Endothelial cell of umbilical vein (primary cell): ENCODE measurements at regions of chr14 and their contacts with region 1.

Region 1: DNA sequence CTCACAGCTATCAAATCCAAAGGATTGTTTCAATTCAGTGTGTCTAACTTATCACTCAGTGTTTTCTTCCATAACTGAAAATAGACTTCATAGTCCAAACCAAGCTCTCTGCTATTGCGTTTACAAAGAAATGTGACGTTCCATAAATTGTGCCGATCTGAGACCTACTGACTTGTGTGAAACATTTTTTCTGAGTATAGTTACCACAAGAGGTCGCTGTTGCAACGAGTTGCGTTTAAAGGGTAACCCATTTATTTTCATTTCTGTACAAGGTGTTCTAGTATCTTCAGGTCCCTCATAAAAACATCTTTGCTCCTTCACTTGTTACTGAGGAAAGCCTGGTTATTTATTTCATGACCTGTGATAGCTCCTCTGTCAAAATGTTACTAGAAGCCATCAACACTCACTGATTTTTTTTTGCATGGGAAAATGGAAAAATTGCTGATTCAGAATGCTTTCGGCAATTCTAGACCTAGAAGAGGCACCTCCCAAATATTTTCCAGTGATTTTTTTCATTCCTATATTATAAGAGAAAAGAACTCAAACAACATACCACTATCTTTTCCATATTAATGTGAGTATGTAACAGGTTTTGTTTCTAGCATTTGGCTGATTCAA is 60.9 kb upstream of the OR4E1 start:
- DNase-seq: peak; percentile 56
- H3K4me3 ChIP-seq: no peak overlapping the region
- H3K27ac ChIP-seq: no peak overlapping the region
- H3K4me1 ChIP-seq: no peaks in the 10 kb centered on the region
- H3K27me3 ChIP-seq: peaks cover 8 to 12% of the 10 kb centered on the region in 2 experiments
- CTCF ChIP-seq: peak; percentile 46 to 64
- POLR2A ChIP-seq: no peak

Region 2: GRCh38 chr14:21711360-21711961 is 23.1 kb before region 1 on chr14:
- CTCF ChIA-PET with region 1: interaction called, 11 read pairs
- POLR2A ChIA-PET with region 1: no interaction called
- dilution Hi-C with region 1: no loop called
- intact Hi-C with region 1: no loop called
- DNase-seq: peak; percentile 52
- H3K4me3 ChIP-seq: no peak overlapping the region
- H3K27ac ChIP-seq: no peak overlapping the region
- H3K4me1 ChIP-seq: no peaks in the 10 kb centered on the region
- H3K27me3 ChIP-seq: peaks cover 2 to 4% of the 10 kb centered on the region in 2 experiments
- CTCF ChIP-seq: peak; percentile 58 to 66
- POLR2A ChIP-seq: no peak

Region 3: DNA sequence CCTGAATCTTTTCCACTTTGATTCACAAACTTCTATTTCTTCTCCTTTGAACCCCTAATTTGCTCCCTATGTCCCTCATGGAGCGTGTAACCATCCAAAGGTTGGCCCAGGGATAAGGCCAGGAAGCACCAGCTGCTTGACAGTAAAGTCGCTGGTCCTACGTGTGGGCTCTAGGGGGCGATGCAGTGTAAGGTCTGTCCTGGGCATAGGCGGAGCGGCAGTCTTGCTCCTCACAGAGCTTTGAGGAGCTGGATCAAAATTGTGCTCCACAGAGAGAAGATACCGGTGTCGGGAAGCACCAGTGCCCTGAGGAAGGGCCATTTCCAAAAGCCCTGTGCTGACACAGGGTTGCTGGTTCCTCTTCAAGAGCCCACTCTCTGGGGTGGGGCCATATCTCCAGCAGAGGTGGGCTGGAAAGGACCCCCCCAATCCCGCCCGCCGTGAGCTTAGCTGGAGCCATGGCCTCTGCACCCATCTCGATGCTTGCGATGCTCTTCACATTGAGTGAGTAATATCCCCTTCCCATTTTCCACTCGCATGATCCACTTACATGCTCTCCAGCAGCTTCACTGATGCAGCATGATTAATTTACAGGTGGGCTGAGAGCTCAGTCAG is 11.0 kb before region 1 on chr14:
- CTCF ChIA-PET with region 1: interaction called, 20 read pairs
- POLR2A ChIA-PET with region 1: no interaction called
- dilution Hi-C with region 1: no loop called
- intact Hi-C with region 1: no loop called
- DNase-seq: no peak
- H3K4me3 ChIP-seq: no peak overlapping the region
- H3K27ac ChIP-seq: no peak overlapping the region
- H3K4me1 ChIP-seq: no peaks in the 10 kb centered on the region
- H3K27me3 ChIP-seq: peaks cover 6 to 9% of the 10 kb centered on the region in 2 experiments
- CTCF ChIP-seq: peak; percentile 29 to 42
- POLR2A ChIP-seq: no peak

Region 4: DNA sequence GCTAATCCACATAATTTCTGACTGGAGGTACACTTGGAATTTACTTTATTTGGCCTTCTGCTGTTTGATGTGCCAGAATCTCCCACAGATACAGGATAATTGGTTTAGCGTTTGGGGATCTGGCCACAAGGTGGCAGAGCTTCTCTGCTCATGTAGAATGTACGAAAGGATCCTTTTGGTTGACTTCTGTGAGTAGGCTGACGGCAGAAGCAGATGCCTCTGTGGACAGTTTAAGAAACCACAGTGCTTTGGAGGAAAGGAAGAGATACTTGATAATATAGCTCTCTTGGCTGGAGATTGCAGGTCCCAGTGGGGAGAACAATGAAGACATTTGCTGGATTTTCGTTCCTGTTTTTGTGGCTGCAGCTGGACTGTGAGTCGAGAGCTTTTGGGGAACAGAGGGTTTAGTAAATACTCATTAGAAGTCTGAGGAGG is 14.3 kb after region 1 on chr14:
- CTCF ChIA-PET with region 1: interaction called, 13 read pairs
- POLR2A ChIA-PET with region 1: no interaction called
- dilution Hi-C with region 1: no loop called
- intact Hi-C with region 1: no loop called
- DNase-seq: peak; percentile 46
- H3K4me3 ChIP-seq: no peak overlapping the region
- H3K27ac ChIP-seq: no peak overlapping the region
- H3K4me1 ChIP-seq: no peaks in the 10 kb centered on the region
- H3K27me3 ChIP-seq: peaks cover 0 to 19% of the 10 kb centered on the region in 2 experiments
- CTCF ChIP-seq: peak; percentile 62 to 73
- POLR2A ChIP-seq: no peak

Region 5: GRCh38 chr14:22095860-22096513 is 361.4 kb after region 1 on chr14:
- CTCF ChIA-PET with region 1: no interaction called
- POLR2A ChIA-PET with region 1: no interaction called
- dilution Hi-C with region 1: no loop called
- intact Hi-C with region 1: no loop called
- DNase-seq: no peak
- H3K4me3 ChIP-seq: no peak overlapping the region
- H3K27ac ChIP-seq: no peak overlapping the region
- H3K4me1 ChIP-seq: peaks cover 9% of the 10 kb centered on the region
- H3K27me3 ChIP-seq: no peaks in the 10 kb centered on the region
- CTCF ChIP-seq: no peak
- POLR2A ChIP-seq: no peak